AG04450 (cell line): ENCODE measurements at regions of chr3 and their contacts with region 1.

Region 1: GRCh38 chr3:190513409-190514162 is at the start of gene IL1RAP:
- DNase-seq: peak; percentile 65
- H3K4me3 ChIP-seq: peak within 1 kb of the TSS; percentile 86
- H3K27ac ChIP-seq: peak within 1 kb of the TSS; percentile 35
- H3K27me3 ChIP-seq: no peaks in the 10 kb centered on the region
- CTCF ChIP-seq: peak; percentile 18
- polyA plus RNA-seq, gene IL1RAP: 9.9 and 11.4 TPM in 2 replicates

Region 2: GRCh38 chr3:190467922-190468321 is 45.7 kb before region 1 on chr3:
- CTCF ChIA-PET with region 1: no interaction called
- POLR2A ChIA-PET with region 1: no interaction called
- DNase-seq: no peak
- H3K4me3 ChIP-seq: no peak overlapping the region
- H3K27ac ChIP-seq: no peak overlapping the region
- H3K27me3 ChIP-seq: no peaks in the 10 kb centered on the region
- CTCF ChIP-seq: no peak

Region 3: GRCh38 chr3:190533511-190534277 is 20.1 kb after region 1 on chr3:
- CTCF ChIA-PET with region 1: interaction called, 18 read pairs
- POLR2A ChIA-PET with region 1: interaction called, 4 read pairs
- DNase-seq: peak; percentile 78
- H3K4me3 ChIP-seq: no peak overlapping the region
- H3K27ac ChIP-seq: peak overlapping the region; percentile 95
- H3K27me3 ChIP-seq: no peaks in the 10 kb centered on the region
- CTCF ChIP-seq: no peak